Sigmoid colon (tissue), 7 donors: ENCODE measurements at regions of chr17 and their contacts with region 1.

Region 1: DNA sequence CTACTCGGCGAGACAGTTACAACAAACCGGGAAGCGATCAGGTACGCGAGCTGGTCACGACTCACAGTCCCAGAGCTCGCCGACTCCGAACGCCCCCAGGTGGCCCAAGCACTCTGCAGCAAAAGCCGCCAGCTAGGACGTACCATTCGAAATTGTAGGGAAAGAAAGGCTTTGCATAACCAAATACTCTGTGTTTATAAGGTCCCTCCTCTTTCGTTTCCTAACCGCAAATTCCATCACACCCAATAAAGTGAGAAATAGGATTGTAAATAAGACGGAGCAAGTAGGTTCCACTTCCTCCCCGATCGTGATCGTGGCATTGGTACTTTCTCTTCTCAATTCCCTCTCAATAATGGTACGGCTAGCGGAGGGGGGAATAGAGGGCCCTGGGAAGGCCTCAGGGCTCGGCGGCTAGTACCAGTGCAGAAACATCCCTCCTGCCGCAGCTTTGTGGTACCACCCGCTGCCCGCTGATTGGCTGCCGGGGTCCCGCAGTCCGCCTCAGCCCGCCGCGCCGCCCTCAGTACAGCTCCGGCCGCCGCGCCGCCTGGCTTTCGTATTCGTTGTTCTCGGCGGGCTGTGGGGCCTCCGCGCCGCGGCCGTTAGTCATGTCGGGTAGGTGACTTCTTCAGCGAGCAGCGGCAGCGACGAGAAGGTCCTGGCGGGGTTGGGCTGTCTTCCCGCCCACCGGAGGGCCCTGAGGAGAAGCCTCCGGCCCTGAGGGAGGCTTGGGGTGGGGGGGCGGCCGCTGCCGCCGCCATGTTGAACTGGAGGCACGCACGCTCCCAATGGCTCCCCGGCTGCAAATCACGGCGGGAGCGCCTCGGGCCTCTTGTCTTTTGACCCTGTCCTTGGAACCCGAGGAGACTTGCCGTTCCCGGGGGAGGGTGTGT is at the start of gene TAF15:
- DNase-seq: peak; percentile 98
- H3K4me3 ChIP-seq: peak within 1 kb of the TSS; percentile 83 to 89 (median 86)
- H3K27ac ChIP-seq: peak within 1 kb of the TSS; percentile 90 to 98 (median 94)
- H3K4me1 ChIP-seq: peaks cover 0 to 50% (median 35%) of the 10 kb centered on the region in 4 donors
- H3K27me3 ChIP-seq: no peaks in the 10 kb centered on the region
- CTCF ChIP-seq: peak; percentile 65 to 83 (median 74)
- EP300 ChIP-seq: no peak
- POLR2A ChIP-seq: peak; percentile 99
- total RNA-seq, gene TAF15: 58.1 to 85.9 (median 71.3) TPM

Region 2: GRCh38 chr17:35587074-35587971 is 221.9 kb before region 1 on chr17 and contains the start of gene AP2B1:
- intact Hi-C with region 1: loop called (anchors 5 kb)
- DNase-seq: peak; percentile 97
- H3K4me3 ChIP-seq: peak within 1 kb of the TSS; percentile 77 to 92 (median 82)
- H3K27ac ChIP-seq: peak within 1 kb of the TSS; percentile 88 to 95 (median 90)
- H3K4me1 ChIP-seq: peaks cover 3 to 40% (median 29%) of the 10 kb centered on the region in 4 donors
- H3K27me3 ChIP-seq: no peaks in the 10 kb centered on the region
- CTCF ChIP-seq: no peak
- EP300 ChIP-seq: peak in 1 of 4 donors; percentile 56
- POLR2A ChIP-seq: peak; percentile 56 to 58
- total RNA-seq, gene AP2B1: 46.7 to 58.7 (median 53.2) TPM

Region 3: GRCh38 chr17:35764123-35764991 is 44.9 kb before region 1 on chr17:
- intact Hi-C with region 1: loop called (anchors 1 kb)
- DNase-seq: peak; percentile 91
- H3K4me3 ChIP-seq: peak overlapping the region; percentile 23 to 57 (median 48)
- H3K27ac ChIP-seq: peak overlapping the region; percentile 44 to 77 (median 67)
- H3K4me1 ChIP-seq: peaks cover 0 to 39% (median 24%) of the 10 kb centered on the region in 4 donors
- H3K27me3 ChIP-seq: no peaks in the 10 kb centered on the region
- CTCF ChIP-seq: peak; percentile 90 to 99 (median 94)
- EP300 ChIP-seq: no peak
- POLR2A ChIP-seq: no peak